Naive thymus-derived CD4-positive, alpha-beta T cell (primary cell): ENCODE measurements at regions of chr15 and their contacts with region 1.

Region 1: GRCh38 chr15:60044636-60045270 is 40.6 kb downstream of the FOXB1 start:
- DNase-seq: peak in 8 of 9 donors; percentile 33 to 66 (median 45)
- ATAC-seq: peak; percentile 44
- H3K4me3 ChIP-seq: no peak overlapping the region
- H3K4me3 Mint-ChIP-seq: peak overlapping the region in 8 of 10 donors; percentile 21 to 78 (median 50)
- H3K27ac ChIP-seq: no peak overlapping the region
- H3K27ac Mint-ChIP-seq: peak overlapping the region in 5 of 9 donors; percentile 5 to 67 (median 27)
- H3K4me1 ChIP-seq: peaks cover 5% of the 10 kb centered on the region in 2 donors
- H3K4me1 Mint-ChIP-seq: peaks cover 3 to 23% (median 19%) of the 10 kb centered on the region in 7 donors
- H3K27me3 ChIP-seq: no peaks in the 10 kb centered on the region
- H3K27me3 Mint-ChIP-seq: peaks cover 0 to 15% (median 11%) of the 10 kb centered on the region in 5 donors

Region 2: DNA sequence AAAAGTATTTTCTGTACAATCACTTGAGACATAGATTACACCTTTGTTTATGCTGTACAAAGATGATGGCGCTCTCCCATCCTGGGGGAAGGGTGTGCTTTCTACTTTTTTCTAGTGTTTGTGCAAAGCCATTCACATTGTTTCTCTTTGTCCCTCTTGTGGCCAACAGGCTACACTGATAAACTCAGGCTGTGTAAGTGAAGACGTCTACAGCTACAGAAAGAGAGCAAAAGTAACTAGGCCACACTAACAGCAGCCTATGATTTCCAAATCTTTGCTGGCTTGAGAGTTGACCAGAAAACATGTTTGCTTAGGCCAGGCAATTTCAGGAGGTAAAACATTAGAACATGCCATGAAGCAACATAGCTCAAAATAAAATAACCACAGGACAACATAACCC is 34.5 kb after region 1 on chr15:
- CTCF ChIA-PET with region 1: no interaction called
- POLR2A ChIA-PET with region 1: no interaction called
- intact Hi-C with region 1: loop called in 1 of 2 experiments (anchors 5 kb)
- DNase-seq: peak in 1 of 9 donors; percentile 11
- ATAC-seq: no peak
- H3K4me3 ChIP-seq: no peak overlapping the region
- H3K4me3 Mint-ChIP-seq: no peak overlapping the region
- H3K27ac ChIP-seq: no peak overlapping the region
- H3K27ac Mint-ChIP-seq: no peak overlapping the region
- H3K4me1 ChIP-seq: peaks cover 4 to 14% of the 10 kb centered on the region in 2 donors
- H3K4me1 Mint-ChIP-seq: peaks cover 3 to 36% (median 25%) of the 10 kb centered on the region in 7 donors
- H3K27me3 ChIP-seq: no peaks in the 10 kb centered on the region
- H3K27me3 Mint-ChIP-seq: peaks cover 0 to 7% (median 5%) of the 10 kb centered on the region in 5 donors